Psoas muscle (tissue), 8 donors: ENCODE measurements at regions of chr2 and their contacts with region 1.

Region 1: DNA sequence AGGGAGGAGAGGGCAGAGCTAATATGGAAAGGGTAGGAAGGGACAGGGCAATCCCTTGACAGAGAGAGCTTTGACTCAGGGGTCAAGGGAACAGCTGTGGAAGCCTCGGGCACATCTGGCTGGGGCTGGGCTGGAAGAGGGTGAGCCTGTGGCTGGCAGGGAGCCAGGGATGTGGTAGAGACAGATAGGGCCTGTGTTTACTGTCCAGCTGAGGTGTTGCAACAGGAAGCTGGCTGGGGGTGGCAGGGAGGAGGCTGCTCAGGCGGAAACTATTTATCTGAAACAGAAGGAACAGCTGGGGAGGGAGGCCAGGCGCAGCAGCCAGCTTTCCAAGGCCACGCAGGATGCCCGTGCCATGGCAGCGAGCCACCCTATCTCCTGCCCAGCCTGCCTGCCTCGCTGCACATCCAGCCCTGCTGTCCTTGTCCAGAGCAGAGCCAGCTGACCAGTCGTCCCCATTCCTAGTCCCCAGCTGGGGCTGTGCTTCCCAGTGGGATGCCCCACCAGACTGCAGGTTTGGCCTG is 264.7 kb downstream of the CYP26B1 start:
- DNase-seq: peak; percentile 93 to 97
- ATAC-seq: peak; percentile 81 to 89 (median 85)
- H3K4me3 ChIP-seq: no peak overlapping the region
- H3K27ac ChIP-seq: peak overlapping the region; percentile 71
- H3K4me1 ChIP-seq: peaks cover 41% of the 10 kb centered on the region
- H3K27me3 ChIP-seq: no peaks in the 10 kb centered on the region
- CTCF ChIP-seq: no peak

Region 2: GRCh38 chr2:71282495-71282894 is 600.5 kb before region 1 on chr2:
- intact Hi-C with region 1: no loop called
- DNase-seq: no peak
- ATAC-seq: peak in 3 of 4 donors; percentile 26 to 35 (median 35)
- H3K4me3 ChIP-seq: no peak overlapping the region
- H3K27ac ChIP-seq: peak overlapping the region; percentile 93
- H3K4me1 ChIP-seq: peaks cover 53% of the 10 kb centered on the region
- H3K27me3 ChIP-seq: no peaks in the 10 kb centered on the region
- CTCF ChIP-seq: peak; percentile 8

Region 3: GRCh38 chr2:71545572-71546274 is 337.3 kb before region 1 on chr2:
- intact Hi-C with region 1: no loop called
- DNase-seq: peak in 1 of 2 donors; percentile 66
- ATAC-seq: peak; percentile 34 to 76 (median 60)
- H3K4me3 ChIP-seq: peak overlapping the region; percentile 22
- H3K27ac ChIP-seq: peak overlapping the region; percentile 55
- H3K4me1 ChIP-seq: peaks cover 5% of the 10 kb centered on the region
- H3K27me3 ChIP-seq: no peaks in the 10 kb centered on the region
- CTCF ChIP-seq: peak; percentile 61

Region 4: GRCh38 chr2:71784734-71785473 is 98.1 kb before region 1 on chr2:
- intact Hi-C with region 1: loop called in 1 of 2 experiments (anchors 5 kb)
- DNase-seq: no peak
- ATAC-seq: peak; percentile 89 to 95 (median 91)
- H3K4me3 ChIP-seq: no peak overlapping the region
- H3K27ac ChIP-seq: peak overlapping the region; percentile 70
- H3K4me1 ChIP-seq: peaks cover 16% of the 10 kb centered on the region
- H3K27me3 ChIP-seq: no peaks in the 10 kb centered on the region
- CTCF ChIP-seq: peak; percentile 12

Region 5: GRCh38 chr2:71934595-71935261 is 51.7 kb after region 1 on chr2:
- intact Hi-C with region 1: loop called in 1 of 2 experiments (anchors 5 kb)
- DNase-seq: peak; percentile 68 to 82
- ATAC-seq: peak; percentile 33 to 69 (median 56)
- H3K4me3 ChIP-seq: no peak overlapping the region
- H3K27ac ChIP-seq: peak overlapping the region; percentile 24
- H3K4me1 ChIP-seq: peaks cover 9% of the 10 kb centered on the region
- H3K27me3 ChIP-seq: no peaks in the 10 kb centered on the region
- CTCF ChIP-seq: no peak

Region 6: GRCh38 chr2:72678024-72678423 is 795.0 kb after region 1 on chr2:
- intact Hi-C with region 1: no loop called
- DNase-seq: no peak
- ATAC-seq: no peak
- H3K4me3 ChIP-seq: no peak overlapping the region
- H3K27ac ChIP-seq: no peak overlapping the region
- H3K4me1 ChIP-seq: peaks cover 11% of the 10 kb centered on the region
- H3K27me3 ChIP-seq: no peaks in the 10 kb centered on the region
- CTCF ChIP-seq: no peak